Calu3 (cell line): ENCODE measurements at regions of chr12 and their contacts with region 1.

Region 1: GRCh38 chr12:99386907-99387306 is 260.6 kb upstream of the GARIN6 start:
- DNase-seq: peak; percentile 13
- H3K4me3 Mint-ChIP-seq: no peak overlapping the region
- H3K27ac Mint-ChIP-seq: no peak overlapping the region
- H3K4me1 Mint-ChIP-seq: peaks cover 2% of the 10 kb centered on the region
- H3K27me3 Mint-ChIP-seq: no peaks in the 10 kb centered on the region
- CTCF ChIP-seq: peak; percentile 29

Region 2: DNA sequence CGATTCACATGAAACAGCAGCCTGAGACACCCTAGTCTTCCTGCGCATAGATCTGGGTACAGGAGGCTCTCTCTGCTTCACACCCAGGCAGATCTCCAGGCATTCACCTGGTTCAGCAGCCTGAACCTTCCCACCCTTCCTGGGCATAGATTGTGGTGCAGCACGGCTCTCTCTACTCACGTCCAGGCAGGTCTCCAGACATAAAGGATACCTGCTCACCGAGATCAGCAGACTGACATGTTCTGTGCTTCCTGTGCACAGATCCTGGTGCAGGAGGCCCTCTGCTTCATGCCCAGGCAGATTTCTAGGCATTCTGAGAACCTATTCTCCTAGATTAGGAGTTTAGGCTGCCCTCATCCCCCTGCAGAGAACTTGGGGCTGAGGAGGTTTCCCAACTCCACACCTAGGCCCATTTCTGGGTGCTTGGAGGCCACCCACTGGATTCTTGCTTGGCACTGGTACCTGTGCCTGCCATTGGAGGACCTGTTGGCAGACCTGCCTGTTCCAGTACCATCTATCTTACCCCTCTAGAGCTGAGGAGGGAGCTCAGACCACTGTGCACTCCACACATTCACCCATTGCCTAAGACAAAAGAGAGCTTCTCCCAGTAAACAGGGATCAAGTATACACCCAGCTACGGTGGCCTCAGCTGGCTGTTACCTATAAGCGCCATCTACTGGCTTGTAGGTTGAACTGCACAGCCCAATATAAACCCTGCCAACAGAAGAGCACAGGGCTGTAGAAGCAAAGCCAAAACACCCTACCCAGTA is 232.7 kb after region 1 on chr12:
- CTCF ChIA-PET with region 1: interaction called, 4 read pairs
- intact Hi-C with region 1: loop called (anchors 1 kb)
- DNase-seq: peak; percentile 7
- H3K4me3 Mint-ChIP-seq: no peak overlapping the region
- H3K27ac Mint-ChIP-seq: no peak overlapping the region
- H3K4me1 Mint-ChIP-seq: no peaks in the 10 kb centered on the region
- H3K27me3 Mint-ChIP-seq: no peaks in the 10 kb centered on the region
- CTCF ChIP-seq: peak; percentile 45

Region 3: DNA sequence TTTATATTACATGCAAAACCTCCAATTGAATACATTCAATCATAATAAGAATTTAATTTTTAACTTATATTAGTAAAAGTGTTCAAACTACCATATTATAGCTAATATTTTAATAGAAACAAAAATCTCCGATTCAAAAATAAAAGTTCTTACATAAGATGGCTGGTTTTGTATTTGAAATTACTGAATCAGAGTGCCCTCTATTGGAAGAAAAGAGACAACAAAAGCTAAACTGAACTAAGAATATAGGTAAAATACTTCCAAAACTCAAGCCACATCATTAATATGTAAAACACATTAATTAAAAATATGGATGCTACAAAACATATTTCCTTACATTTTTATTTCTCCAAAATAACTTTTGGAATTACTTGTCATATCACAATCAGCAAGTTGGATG is 380.9 kb after region 1 on chr12:
- CTCF ChIA-PET with region 1: interaction called, 3 read pairs
- intact Hi-C with region 1: loop called (anchors 2 kb)
- DNase-seq: no peak
- H3K4me3 Mint-ChIP-seq: no peak overlapping the region
- H3K27ac Mint-ChIP-seq: no peak overlapping the region
- H3K4me1 Mint-ChIP-seq: no peaks in the 10 kb centered on the region
- H3K27me3 Mint-ChIP-seq: peaks cover 18% of the 10 kb centered on the region
- CTCF ChIP-seq: no peak